Common myeloid progenitor, CD34-positive (primary cell): ENCODE measurements at regions of chr6 and their contacts with region 1.

Region 1: GRCh38 chr6:25266456-25267100 is 12.6 kb upstream of the CARMIL1 start:
- DNase-seq: no peak
- H3K4me3 ChIP-seq: no peak overlapping the region
- H3K27ac ChIP-seq: no peak overlapping the region
- H3K4me1 ChIP-seq: no peaks in the 10 kb centered on the region
- H3K27me3 ChIP-seq: no peaks in the 10 kb centered on the region

Region 2: GRCh38 chr6:25278914-25279747 is 12.6 kb after region 1 on chr6 and contains the start of gene CARMIL1:
- CTCF ChIA-PET with region 1: interaction called, 18 read pairs
- POLR2A ChIA-PET with region 1: no interaction called
- DNase-seq: peak; percentile 80 to 93 (median 92)
- H3K4me3 ChIP-seq: peak within 1 kb of the TSS; percentile 71 to 99 (median 84)
- H3K27ac ChIP-seq: peak within 1 kb of the TSS in 1 of 2 experiments; percentile 3
- H3K4me1 ChIP-seq: peaks cover 6 to 38% (median 22%) of the 10 kb centered on the region in 4 experiments
- H3K27me3 ChIP-seq: no peaks in the 10 kb centered on the region

Region 3: GRCh38 chr6:25324066-25324762 is 57.6 kb after region 1 on chr6:
- CTCF ChIA-PET with region 1: no interaction called
- POLR2A ChIA-PET with region 1: no interaction called
- DNase-seq: no peak
- H3K4me3 ChIP-seq: no peak overlapping the region
- H3K27ac ChIP-seq: no peak overlapping the region
- H3K4me1 ChIP-seq: peaks cover 0 to 3% (median 0%) of the 10 kb centered on the region in 4 experiments
- H3K27me3 ChIP-seq: no peaks in the 10 kb centered on the region

Region 4: DNA sequence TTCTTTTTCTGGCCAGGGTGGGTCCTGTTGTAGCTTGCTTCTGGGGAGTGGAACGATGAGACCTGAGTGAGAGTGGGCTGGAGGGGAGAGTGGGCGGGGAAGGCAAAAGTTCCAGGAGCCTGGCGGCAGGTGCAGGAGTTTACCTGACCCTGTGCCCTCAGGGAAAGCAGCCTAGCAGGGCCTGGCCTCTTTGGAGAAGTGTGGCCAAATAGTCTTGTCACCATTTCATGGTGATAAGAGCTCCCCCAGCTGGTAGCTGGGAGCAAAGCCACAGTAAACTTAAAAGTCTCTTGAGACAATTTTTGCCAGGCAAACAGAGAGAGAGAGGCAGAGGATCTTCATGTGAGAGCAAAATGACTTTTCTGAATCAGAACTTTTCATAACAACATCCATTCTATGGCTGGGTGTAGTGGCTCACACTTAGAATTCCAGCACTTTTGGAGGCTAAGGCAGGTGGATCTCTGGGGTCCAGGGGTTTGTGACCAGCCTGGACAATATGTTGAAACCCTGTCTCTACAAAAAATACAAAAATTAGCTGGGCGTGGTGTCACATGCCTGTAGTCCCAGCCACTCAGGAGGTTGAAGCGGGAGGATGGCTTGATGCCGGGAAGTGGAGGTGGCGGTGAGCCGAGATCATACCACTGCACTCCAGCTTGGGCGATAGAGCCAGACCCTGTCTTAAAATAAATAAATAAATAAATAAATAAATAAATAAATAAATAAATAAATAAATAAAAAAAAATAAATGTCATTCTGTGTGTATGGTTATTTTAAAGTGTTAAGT is 223.6 kb after region 1 on chr6:
- CTCF ChIA-PET with region 1: interaction called, 55 read pairs
- POLR2A ChIA-PET with region 1: no interaction called
- DNase-seq: peak; percentile 84 to 91 (median 87)
- H3K4me3 ChIP-seq: no peak overlapping the region
- H3K27ac ChIP-seq: no peak overlapping the region
- H3K4me1 ChIP-seq: peaks cover 0 to 11% (median 3%) of the 10 kb centered on the region in 4 experiments
- H3K27me3 ChIP-seq: no peaks in the 10 kb centered on the region

Region 5: GRCh38 chr6:25556516-25556915 is 289.9 kb after region 1 on chr6:
- CTCF ChIA-PET with region 1: interaction called, 15 read pairs
- POLR2A ChIA-PET with region 1: no interaction called
- DNase-seq: peak; percentile 78 to 88 (median 82)
- H3K4me3 ChIP-seq: no peak overlapping the region
- H3K27ac ChIP-seq: no peak overlapping the region
- H3K4me1 ChIP-seq: no peaks in the 10 kb centered on the region
- H3K27me3 ChIP-seq: no peaks in the 10 kb centered on the region

Region 6: DNA sequence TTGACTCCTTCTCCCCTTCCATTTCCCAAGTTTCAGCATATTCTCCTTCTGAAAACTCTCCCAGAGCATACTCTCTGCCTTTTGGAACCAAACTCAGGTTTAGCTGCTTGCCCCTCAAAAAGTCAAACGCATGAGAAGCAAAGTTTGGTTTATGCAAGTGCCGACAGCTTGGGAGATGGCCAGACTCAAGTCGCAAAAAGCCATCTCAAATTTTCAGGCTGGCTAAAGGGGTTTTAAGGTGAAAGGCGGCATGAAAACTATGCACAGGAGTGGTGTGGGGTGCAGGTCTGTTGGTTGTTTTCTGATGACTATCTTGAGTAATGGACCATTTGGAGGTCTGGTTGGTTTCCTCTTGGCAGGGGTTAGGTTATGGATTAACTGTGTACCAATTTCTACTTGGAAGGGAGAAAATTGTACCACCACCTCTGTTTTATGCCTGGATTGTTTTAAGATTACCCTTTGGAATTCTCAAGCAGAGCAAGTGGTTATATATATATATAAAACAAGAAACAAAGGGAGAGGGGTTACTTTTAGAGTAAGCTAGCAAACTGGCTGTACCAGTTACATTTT is 333.0 kb after region 1 on chr6:
- CTCF ChIA-PET with region 1: interaction called, 15 read pairs
- POLR2A ChIA-PET with region 1: no interaction called
- DNase-seq: no peak
- H3K4me3 ChIP-seq: no peak overlapping the region
- H3K27ac ChIP-seq: no peak overlapping the region
- H3K4me1 ChIP-seq: peaks cover 0 to 3% (median 0%) of the 10 kb centered on the region in 4 experiments
- H3K27me3 ChIP-seq: no peaks in the 10 kb centered on the region